Activated CD4-positive, alpha-beta memory T cell treated with anti-CD3 and anti-CD28 coated beads, Interleukin-2, amount 10 ng/mL, durations not matched to agents 7 days and 5 days (primary cell): ENCODE measurements at regions of chr16 and their contacts with region 1.

Region 1: DNA sequence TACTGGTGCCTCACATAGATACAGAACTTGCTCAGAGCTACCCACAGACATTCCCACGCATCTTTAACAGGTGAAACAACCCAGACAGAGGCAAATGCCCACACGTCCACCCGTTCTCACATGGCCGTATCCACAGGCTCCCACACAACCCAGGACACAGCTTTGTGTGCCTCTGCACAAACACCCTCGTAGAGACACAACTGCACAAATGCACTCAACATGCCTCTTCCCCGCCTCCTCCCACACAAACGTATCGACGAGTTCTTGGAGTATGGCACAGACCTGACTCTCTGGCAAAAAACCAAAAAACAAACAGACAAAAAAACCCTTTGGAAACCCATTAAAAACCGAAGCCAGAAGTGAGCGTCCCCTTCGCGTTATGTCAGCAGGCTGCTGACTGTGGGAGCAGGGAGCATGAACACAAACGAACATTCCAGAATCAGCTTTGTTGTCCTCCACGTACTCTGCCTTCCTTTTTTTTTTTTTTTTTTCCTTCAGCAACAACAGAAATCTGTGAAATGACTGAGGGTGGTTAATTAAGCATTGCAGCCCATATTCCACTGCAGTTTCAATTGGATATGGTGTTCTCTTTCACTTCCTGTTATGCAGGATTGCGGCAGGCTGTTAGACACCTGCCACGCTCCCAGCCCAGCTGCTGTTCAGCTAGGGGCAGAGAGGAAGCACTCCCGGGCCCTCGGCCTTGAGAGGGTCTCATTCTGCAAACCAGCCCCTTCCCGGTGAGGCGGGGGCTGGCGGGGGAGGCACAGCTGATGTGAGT is 313.7 kb downstream of the MAF start:
- DNase-seq: peak; percentile 50
- H3K4me3 Mint-ChIP-seq: peak overlapping the region; percentile 59
- H3K27ac Mint-ChIP-seq: peak overlapping the region; percentile 78
- H3K4me1 Mint-ChIP-seq: peaks cover 63% of the 10 kb centered on the region
- H3K27me3 Mint-ChIP-seq: no peaks in the 10 kb centered on the region

Region 2: DNA sequence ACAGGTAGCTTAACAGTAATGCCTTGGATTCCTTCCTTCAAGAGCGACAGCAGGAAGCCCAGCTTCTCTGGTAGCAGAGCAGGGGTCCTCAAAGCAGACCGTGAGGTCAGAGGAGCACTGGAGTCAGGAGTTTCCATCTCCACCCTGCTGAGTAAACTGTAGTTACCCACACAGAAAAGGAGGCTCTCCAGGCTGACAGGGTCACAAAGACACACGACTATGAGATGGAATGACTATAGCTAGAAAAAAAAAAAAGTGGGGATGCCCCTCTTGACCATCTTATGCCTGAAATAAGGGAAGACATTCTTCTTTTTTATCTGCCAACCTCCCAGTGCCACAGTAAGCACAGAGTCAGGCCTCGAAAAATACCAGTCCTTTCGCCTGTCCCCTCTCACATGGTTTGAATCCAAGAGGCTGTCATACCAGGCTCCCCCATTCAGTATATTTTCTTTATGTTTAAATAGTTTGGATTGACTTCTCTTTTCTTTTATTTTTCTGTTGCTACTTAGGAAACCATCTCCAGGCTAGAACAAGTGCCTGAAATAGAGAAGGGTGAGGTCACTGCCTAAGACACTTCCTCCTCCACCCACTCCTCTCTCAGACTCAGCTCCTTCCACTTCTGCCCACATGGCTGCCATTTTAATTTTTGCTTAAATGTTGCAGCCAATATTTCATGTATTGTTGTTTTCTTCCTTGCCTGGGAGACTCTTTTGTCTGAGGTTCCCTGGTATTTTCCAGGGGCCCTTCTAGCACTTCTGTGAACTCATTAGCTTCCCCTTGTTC is 393.7 kb before region 1 on chr16:
- CTCF ChIA-PET with region 1: interaction called, 3 read pairs
- POLR2A ChIA-PET with region 1: interaction called, 12 read pairs
- DNase-seq: no peak
- H3K4me3 Mint-ChIP-seq: no peak overlapping the region
- H3K27ac Mint-ChIP-seq: peak overlapping the region; percentile 85
- H3K4me1 Mint-ChIP-seq: peaks cover 91% of the 10 kb centered on the region
- H3K27me3 Mint-ChIP-seq: no peaks in the 10 kb centered on the region

Region 3: GRCh38 chr16:79269211-79269863 is 17.5 kb before region 1 on chr16:
- CTCF ChIA-PET with region 1: interaction called, 22 read pairs
- POLR2A ChIA-PET with region 1: interaction called, 135 read pairs
- DNase-seq: peak; percentile 75
- H3K4me3 Mint-ChIP-seq: peak overlapping the region; percentile 52
- H3K27ac Mint-ChIP-seq: peak overlapping the region; percentile 89
- H3K4me1 Mint-ChIP-seq: peaks cover 90% of the 10 kb centered on the region
- H3K27me3 Mint-ChIP-seq: no peaks in the 10 kb centered on the region

Region 4: DNA sequence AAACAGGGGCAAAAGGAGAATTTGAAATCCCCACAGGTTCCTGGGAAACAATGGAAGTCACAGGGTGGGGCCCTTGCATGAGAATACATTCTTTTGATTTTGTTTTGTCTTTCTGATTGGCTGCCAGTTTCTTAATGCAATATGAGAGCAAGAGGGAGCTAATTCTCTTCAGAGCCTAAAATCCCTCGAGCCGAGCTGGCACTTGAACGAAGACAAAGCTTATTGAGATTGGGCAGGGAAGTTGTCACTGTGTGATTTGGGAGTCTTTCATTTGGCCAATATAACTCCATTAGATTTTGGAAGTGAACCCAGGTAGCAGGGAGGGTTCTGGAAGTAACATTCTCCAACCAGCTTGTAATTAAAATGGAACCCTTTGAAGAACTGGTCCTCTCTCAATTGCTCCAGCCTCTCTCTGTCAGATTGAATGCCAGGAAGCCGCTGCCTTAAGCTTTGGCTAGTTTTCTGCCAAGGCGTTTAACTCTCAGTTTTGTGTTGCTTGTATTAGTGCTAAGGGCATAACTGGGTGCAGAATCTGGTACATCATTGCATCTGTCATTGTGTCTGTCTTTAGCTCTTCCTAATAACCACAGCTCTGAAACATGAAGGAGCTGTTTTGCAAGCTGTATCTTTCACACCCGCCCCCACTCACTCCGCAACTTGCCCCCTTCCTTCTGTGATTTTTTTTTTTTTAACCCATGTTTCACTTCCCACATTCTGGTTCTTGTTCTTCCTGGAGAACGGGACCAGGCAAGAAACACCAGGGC is 41.7 kb after region 1 on chr16:
- CTCF ChIA-PET with region 1: no interaction called
- POLR2A ChIA-PET with region 1: no interaction called
- DNase-seq: no peak
- H3K4me3 Mint-ChIP-seq: no peak overlapping the region
- H3K27ac Mint-ChIP-seq: no peak overlapping the region
- H3K4me1 Mint-ChIP-seq: no peaks in the 10 kb centered on the region
- H3K27me3 Mint-ChIP-seq: peaks cover 3% of the 10 kb centered on the region